ENCODE measurements at regions of chr20 and their contacts with region 1.

Region 1: GRCh38 chr20:52191132-52191915 is at the start of gene ZFP64:
- DNase-seq: peak; percentile 87
- CTCF ChIP-seq: peak; percentile 89

Region 2: DNA sequence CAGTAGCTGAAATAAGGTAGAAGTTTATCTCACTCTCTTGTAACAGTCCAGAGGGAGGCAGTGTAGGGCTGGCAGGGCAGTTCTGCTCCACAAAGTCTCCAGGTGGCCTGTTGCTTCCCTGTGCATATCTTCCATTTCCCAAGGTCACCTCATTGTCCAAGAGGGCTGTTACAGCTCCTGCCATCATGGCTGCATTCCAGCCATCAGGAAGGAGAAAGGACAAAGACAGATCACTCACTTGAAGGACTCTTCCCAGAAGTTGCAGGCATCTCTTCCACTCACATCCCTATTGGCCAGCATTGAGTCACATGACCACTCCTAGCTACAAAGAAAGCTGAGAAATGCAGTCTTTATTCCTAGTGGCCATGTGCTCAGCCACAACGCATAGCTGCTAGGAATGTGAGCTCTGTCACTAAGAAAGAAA is 1018.3 kb before region 1 on chr20:
- CTCF ChIA-PET with region 1: no interaction called
- POLR2A ChIA-PET with region 1: no interaction called
- DNase-seq: no peak
- CTCF ChIP-seq: no peak

Region 3: GRCh38 chr20:51469578-51470498 is 721.5 kb before region 1 on chr20:
- CTCF ChIA-PET with region 1: no interaction called
- POLR2A ChIA-PET with region 1: no interaction called
- DNase-seq: no peak
- CTCF ChIP-seq: no peak

Region 4: DNA sequence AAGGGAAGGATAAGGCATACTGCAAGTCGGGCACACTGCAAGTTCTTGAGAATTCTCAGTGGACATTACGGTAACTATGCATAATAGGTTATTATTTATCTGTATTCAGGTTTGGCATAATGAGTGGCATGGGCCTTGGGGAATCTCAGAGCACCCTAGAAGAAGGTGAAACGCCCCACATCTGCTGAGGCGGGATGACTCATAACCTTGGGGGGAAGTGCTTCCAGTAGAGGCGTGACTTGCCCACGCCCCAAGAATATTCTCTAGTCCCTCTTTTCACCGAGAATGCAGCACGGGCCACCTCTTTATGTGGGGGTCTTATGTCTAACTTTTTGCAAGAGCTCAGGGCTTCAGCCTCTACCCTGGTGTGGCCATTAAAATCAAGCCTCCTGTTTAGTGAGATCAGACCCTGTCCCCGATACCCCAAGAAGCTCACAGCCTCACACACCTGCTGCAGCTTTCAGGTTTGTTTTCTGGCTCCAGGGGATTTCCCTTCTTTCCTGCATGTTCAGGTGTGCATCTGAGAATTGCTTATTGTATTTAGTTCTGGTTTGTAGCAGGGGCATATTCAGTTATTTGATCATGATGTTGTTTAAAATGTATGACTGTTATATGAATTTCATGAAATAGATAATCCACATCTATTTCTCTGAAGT is 18.8 kb before region 1 on chr20:
- CTCF ChIA-PET with region 1: interaction called, 22 read pairs
- POLR2A ChIA-PET with region 1: no interaction called
- DNase-seq: peak; percentile 70
- CTCF ChIP-seq: no peak

Region 5: GRCh38 chr20:52179331-52180179 is 11.8 kb before region 1 on chr20:
- CTCF ChIA-PET with region 1: interaction called, 22 read pairs
- POLR2A ChIA-PET with region 1: interaction called, 5 read pairs
- DNase-seq: peak; percentile 81
- CTCF ChIP-seq: no peak

Measured in GM10248 (cell line).